Left cardiac atrium (tissue), 4 donors: ENCODE measurements at regions of chr2 and their contacts with region 1.

Region 1: GRCh38 chr2:138373993-138374408 is 127.6 kb upstream of the SPOPL start:
- DNase-seq: no peak
- ATAC-seq: no peak

Region 2: GRCh38 chr2:138536302-138536701 is 162.3 kb after region 1 on chr2:
- intact Hi-C with region 1: no loop called
- DNase-seq: no peak
- ATAC-seq: peak in 1 of 2 donors; percentile 16

Region 3: GRCh38 chr2:138779781-138780445 is 405.9 kb after region 1 on chr2 and contains the start of gene NXPH2:
- intact Hi-C with region 1: loop called in 1 of 2 experiments (anchors 5 kb)
- DNase-seq: no peak
- ATAC-seq: peak; percentile 61 to 66
- total RNA-seq, gene NXPH2: not detected